H1 (cell line): ENCODE measurements at regions of chr17 and their contacts with region 1.

Region 1: DNA sequence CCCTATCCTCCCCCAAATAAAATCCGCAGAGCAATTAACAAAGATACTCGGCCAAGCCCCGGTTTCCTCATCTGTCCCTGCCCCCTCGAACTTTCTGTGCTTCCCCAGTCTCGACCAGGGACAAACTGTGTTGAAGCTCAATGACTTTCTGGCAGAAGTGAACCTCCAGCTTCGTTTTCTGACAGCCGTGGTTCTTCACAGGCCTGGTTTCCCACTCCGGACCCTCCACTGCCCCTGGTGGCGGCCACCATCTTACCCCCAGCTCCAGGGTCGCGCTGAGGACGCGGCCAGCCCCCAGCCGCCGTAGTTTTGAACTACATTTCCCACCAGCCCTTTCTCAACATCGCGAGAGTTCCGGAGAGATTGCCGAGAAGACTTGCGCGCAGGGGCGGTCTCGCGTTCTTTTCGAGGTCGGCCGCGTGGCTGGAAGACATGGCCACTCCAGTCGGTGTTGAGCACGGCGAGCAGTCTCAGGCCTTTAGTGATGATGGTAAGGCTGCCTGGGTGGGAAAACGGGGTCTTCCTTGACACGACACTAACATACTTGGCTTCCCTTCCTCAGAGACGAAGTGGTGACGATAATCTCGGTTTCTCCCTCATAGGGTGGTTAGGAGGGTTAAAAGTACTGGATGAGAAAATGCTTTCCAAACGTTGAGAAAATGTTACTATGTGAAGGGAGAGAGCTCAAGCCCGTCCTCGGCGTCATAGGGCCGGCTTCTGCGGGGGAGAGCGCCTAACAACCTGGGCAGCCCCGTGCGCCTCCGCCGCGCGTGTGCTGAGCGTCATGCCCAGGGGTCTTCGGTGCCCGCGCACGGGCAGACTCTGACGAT is 17.7 kb downstream of the PRCD start:
- DNase-seq: peak; percentile 89 to 97
- H3K4me3 ChIP-seq: peak overlapping the region; percentile 89 to 100 (median 97)
- H3K27ac ChIP-seq: peak overlapping the region; percentile 93
- H3K4me1 ChIP-seq: peaks cover 2 to 10% (median 5%) of the 10 kb centered on the region in 4 experiments; a peak in 6 of 7 replicates
- H3K27me3 ChIP-seq: no peaks in the 10 kb centered on the region
- CTCF ChIP-seq: peak; percentile 63 to 81 (median 65)
- EP300 ChIP-seq: no peak
- POLR2A ChIP-seq: peak; percentile 86 to 95
- RAD21 ChIP-seq: peak; percentile 30 to 34; a peak in 3 of 4 replicates

Region 2: GRCh38 chr17:76506408-76507349 is 50.9 kb before region 1 on chr17:
- CTCF ChIA-PET with region 1: interaction called, 15 read pairs
- POLR2A ChIA-PET with region 1: interaction called, 15 read pairs
- DNase-seq: peak; percentile 56 to 99
- H3K4me3 ChIP-seq: peak overlapping the region in 1 of 4 experiments; percentile 40; a peak in 2 of 8 replicates
- H3K27ac ChIP-seq: no peak overlapping the region
- H3K4me1 ChIP-seq: peaks cover 4 to 9% (median 6%) of the 10 kb centered on the region in 4 experiments
- H3K27me3 ChIP-seq: peaks cover 0 to 6% (median 4%) of the 10 kb centered on the region in 4 experiments; a peak in 5 of 7 replicates
- CTCF ChIP-seq: peak; percentile 92 to 98 (median 93)
- EP300 ChIP-seq: no peak
- POLR2A ChIP-seq: no peak
- RAD21 ChIP-seq: peak; percentile 96 to 97

Region 3: DNA sequence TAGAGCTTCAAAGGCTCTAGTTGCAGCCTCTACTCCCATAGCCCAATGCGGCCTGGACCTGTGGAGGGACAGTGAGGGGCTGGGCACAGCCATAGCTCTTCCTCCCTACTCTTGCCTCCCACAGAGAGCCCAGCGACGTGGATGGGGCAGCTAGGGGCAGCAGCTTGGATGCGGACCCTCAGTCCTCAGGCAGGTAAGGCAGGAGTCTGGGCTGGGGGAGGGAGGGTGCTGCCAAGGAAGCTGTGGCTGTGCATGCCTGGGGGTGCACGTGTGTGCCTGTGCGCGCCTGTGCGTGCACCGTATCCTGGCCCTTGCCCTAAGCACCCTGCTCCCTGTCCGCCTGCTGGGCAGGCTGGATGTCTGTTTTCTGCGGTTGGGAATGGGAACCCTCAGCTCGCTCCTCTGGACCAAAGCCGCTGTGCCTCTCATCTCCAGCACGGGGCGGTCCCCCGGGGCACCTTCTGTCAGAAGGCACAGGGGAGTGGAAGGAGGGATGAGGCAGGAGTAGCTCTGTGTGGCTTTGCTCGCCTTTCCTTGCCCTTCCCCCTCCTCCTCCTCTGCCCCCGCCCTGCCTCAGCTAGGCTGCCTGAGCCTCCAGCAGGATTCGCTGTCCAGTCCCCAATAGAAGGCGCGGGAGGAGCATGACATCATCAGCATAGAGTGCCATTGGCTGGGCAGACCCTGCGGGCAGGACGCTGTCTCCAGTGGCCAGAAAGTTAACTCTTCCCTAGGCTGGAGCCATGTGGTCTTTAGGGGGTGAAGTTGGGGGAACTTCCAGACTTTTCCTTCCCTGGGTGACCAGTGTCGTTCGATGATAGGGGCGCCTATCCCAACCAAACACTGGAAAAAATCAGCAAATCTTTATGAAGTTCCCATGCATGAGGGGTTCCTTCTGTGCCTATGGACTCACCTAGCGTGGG is 16.9 kb before region 1 on chr17:
- CTCF ChIA-PET with region 1: interaction called, 48 read pairs
- POLR2A ChIA-PET with region 1: interaction called, 38 read pairs
- DNase-seq: peak; percentile 88 to 92
- H3K4me3 ChIP-seq: peak overlapping the region; percentile 12 to 50 (median 32); a peak in 7 of 8 replicates
- H3K27ac ChIP-seq: no peak overlapping the region
- H3K4me1 ChIP-seq: peaks cover 0 to 27% (median 16%) of the 10 kb centered on the region in 4 experiments; a peak in 6 of 7 replicates
- H3K27me3 ChIP-seq: peaks cover 8 to 42% (median 35%) of the 10 kb centered on the region in 4 experiments
- CTCF ChIP-seq: peak in 1 of 3 experiments; percentile 28; a peak in 1 of 4 replicates
- EP300 ChIP-seq: no peak
- POLR2A ChIP-seq: no peak
- RAD21 ChIP-seq: no peak

Region 4: GRCh38 chr17:76567634-76568432 is 10.2 kb after region 1 on chr17:
- CTCF ChIA-PET with region 1: interaction called, 71 read pairs
- POLR2A ChIA-PET with region 1: interaction called, 133 read pairs
- DNase-seq: no peak
- H3K4me3 ChIP-seq: no peak overlapping the region
- H3K27ac ChIP-seq: no peak overlapping the region
- H3K4me1 ChIP-seq: peaks cover 0 to 21% (median 5%) of the 10 kb centered on the region in 4 experiments; a peak in 6 of 7 replicates
- H3K27me3 ChIP-seq: no peaks in the 10 kb centered on the region; a peak in 2 of 7 replicates
- CTCF ChIP-seq: no peak
- EP300 ChIP-seq: no peak
- POLR2A ChIP-seq: peak in 1 of 2 experiments; percentile 49; a peak in 1 of 3 replicates
- RAD21 ChIP-seq: no peak

Region 5: GRCh38 chr17:76597728-76598474 is 40.3 kb after region 1 on chr17:
- CTCF ChIA-PET with region 1: interaction called, 3 read pairs
- POLR2A ChIA-PET with region 1: interaction called, 10 read pairs
- DNase-seq: no peak
- H3K4me3 ChIP-seq: no peak overlapping the region
- H3K27ac ChIP-seq: no peak overlapping the region
- H3K4me1 ChIP-seq: peaks cover 0 to 7% (median 3%) of the 10 kb centered on the region in 4 experiments; a peak in 3 of 7 replicates
- H3K27me3 ChIP-seq: no peaks in the 10 kb centered on the region; a peak in 2 of 7 replicates
- CTCF ChIP-seq: no peak
- EP300 ChIP-seq: no peak
- POLR2A ChIP-seq: no peak
- RAD21 ChIP-seq: no peak

Region 6: DNA sequence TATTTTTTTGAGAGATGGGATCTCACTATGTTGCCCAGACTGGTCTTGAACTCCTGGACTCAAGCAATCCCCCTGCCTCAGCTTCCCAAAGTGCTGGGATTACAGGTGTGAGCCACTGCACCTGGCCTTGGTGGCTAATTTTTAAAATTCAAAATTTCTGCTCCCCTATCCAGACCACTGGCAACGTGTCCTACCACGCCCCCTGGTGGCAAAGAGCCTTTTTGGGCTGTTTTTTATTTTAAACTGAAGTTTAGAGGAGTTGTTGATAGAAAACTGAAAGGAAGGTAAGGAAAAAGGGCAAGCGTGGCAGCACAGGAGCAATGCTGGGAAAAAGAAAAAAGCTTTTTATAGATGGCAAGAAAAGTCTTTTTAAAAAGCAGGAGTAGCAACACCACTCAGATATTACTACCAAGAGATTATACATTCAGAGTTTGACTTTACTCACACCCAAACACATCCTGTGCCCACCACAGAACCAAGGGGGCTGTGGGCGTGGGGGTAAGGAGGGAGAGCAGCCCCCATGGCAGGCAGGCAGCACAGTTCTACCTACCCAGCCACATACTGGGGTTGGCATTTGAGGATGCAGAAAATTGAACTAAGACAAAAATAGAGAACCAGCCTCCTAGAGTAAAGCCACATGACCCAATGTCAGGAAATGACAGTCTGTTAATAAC is 157.4 kb after region 1 on chr17:
- CTCF ChIA-PET with region 1: interaction called, 10 read pairs
- POLR2A ChIA-PET with region 1: interaction called, 5 read pairs
- DNase-seq: peak in 1 of 2 experiments; percentile 92
- H3K4me3 ChIP-seq: no peak overlapping the region
- H3K27ac ChIP-seq: no peak overlapping the region
- H3K4me1 ChIP-seq: peaks cover 2 to 7% (median 5%) of the 10 kb centered on the region in 4 experiments; a peak in 5 of 7 replicates
- H3K27me3 ChIP-seq: peaks cover 0 to 3% (median 2%) of the 10 kb centered on the region in 4 experiments; a peak in 5 of 7 replicates
- CTCF ChIP-seq: peak; percentile 53 to 80 (median 70)
- EP300 ChIP-seq: no peak
- POLR2A ChIP-seq: no peak
- RAD21 ChIP-seq: peak; percentile 55 to 69

Region 7: GRCh38 chr17:76826330-76827068 is 268.9 kb after region 1 on chr17:
- CTCF ChIA-PET with region 1: no interaction called
- POLR2A ChIA-PET with region 1: no interaction called
- DNase-seq: no peak
- H3K4me3 ChIP-seq: no peak overlapping the region
- H3K27ac ChIP-seq: no peak overlapping the region
- H3K4me1 ChIP-seq: no peaks in the 10 kb centered on the region
- H3K27me3 ChIP-seq: no peaks in the 10 kb centered on the region; a peak in 1 of 7 replicates
- CTCF ChIP-seq: no peak
- EP300 ChIP-seq: no peak
- POLR2A ChIP-seq: no peak
- RAD21 ChIP-seq: no peak